AG04449 (cell line): ENCODE measurements at regions of chr5 and their contacts with region 1.

Region 1: DNA sequence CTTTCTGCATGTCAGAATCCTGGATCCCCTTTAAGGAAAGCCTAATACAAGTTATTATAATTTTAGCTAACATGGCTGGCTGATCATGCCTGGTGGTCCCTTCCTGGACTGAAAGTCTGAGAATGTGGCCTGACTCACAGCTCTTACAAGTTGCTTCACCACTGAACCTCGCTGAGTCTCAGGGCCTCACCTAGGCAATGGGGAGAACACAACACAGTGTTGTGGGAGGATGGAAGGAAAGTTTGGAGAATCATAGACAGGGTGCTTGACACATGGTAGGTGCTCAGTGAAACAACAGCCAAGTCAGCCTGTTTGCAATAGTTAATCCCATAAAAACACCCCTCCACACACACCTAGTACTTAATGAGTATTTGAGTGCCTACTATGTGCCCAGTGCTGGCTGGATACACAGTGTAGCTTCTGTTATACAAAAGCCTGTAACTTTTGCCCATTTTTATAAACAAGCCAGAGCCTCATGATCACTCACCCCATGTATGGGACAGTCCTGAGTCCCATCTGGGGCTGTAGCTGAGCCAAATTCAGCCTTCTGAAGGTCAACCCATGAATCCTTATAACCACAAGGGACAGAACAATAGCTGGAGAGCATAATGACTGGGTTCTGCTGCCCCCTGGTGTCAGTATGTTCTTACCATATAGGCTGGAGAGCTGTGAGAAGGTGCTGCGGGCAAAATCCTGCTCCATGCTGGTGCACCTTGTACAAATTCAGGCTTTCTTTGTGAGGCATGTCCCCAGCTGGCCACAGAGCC is 3.9 kb downstream of the ACSL6 start:
- DNase-seq: peak; percentile 17
- H3K4me3 ChIP-seq: no peak overlapping the region
- CTCF ChIP-seq: peak; percentile 73

Region 2: DNA sequence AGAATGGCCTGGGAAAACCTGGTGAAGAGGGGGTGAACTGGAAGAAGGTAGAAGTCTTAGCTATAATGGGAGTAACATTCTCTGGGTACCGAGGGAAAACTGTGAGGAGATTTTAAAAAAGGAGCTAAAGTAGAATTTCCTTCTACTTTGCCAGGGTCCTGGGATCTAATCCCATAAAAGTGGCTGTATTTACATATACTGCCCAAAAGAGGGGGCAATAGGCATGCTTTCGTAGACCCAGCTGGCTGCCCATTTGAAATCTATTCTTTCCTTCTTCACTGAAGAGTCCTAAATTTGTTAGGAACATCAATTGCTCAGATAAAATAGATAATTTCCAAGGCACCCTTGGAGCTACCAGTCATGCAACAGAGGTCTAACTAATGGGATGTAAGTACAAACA is 584.5 kb before region 1 on chr5:
- CTCF ChIA-PET with region 1: interaction called, 27 read pairs
- POLR2A ChIA-PET with region 1: no interaction called
- DNase-seq: no peak
- H3K4me3 ChIP-seq: no peak overlapping the region
- CTCF ChIP-seq: peak; percentile 49

Region 3: GRCh38 chr5:131720714-131721113 is 286.9 kb before region 1 on chr5:
- CTCF ChIA-PET with region 1: no interaction called
- POLR2A ChIA-PET with region 1: no interaction called
- DNase-seq: no peak
- H3K4me3 ChIP-seq: no peak overlapping the region
- CTCF ChIP-seq: no peak

Region 4: GRCh38 chr5:131810510-131811249 is 196.9 kb before region 1 on chr5:
- CTCF ChIA-PET with region 1: interaction called, 93 read pairs
- POLR2A ChIA-PET with region 1: no interaction called
- DNase-seq: no peak
- H3K4me3 ChIP-seq: no peak overlapping the region
- CTCF ChIP-seq: no peak

Region 5: DNA sequence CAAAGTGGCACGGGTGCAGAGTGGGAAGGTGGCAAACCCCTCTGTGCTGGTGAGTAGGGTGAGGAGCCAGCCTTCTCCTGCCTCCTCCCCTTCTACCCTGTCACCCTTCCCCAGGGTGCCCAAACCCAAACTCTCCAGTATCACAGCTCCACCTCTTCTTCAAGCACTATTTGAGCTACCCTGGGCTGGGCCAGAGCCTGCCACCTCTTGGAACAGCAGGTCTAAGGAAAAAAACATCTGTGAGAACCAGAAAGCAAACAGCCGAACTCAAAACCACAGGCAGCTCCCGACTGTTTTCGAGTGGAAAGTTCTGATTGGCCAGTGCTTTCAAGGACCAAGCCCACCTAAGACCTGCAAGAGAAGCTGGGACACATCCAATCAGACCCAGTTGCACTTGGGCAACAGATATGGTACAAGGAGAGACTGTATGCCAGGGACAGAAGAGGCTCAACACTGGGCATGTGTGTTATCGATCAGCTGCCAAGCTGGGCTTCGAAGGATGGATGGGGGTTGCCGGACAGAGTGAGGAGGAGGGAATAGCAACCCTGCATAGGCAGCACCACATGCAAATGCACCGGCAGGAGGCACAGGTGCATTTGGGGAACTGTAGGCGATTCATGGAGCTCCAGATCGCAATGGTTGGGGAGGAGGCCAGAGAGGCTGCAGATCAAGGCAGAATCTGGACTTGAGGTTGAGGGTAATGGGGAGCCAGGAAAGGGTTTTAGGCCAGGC is 15.8 kb before region 1 on chr5:
- CTCF ChIA-PET with region 1: interaction called, 21 read pairs
- POLR2A ChIA-PET with region 1: no interaction called
- DNase-seq: no peak
- H3K4me3 ChIP-seq: no peak overlapping the region
- CTCF ChIP-seq: no peak